WTC11 (cell line): ENCODE measurements at regions of chr16 and their contacts with region 1.

Region 1: GRCh38 chr16:84726079-84726668 is 26.4 kb downstream of the USP10 start:
- DNase-seq: peak; percentile 91
- ATAC-seq: peak; percentile 60
- H3K4me3 Mint-ChIP-seq: peak overlapping the region; percentile 44
- H3K27ac Mint-ChIP-seq: peak overlapping the region; percentile 94
- H3K4me1 Mint-ChIP-seq: peaks cover 88% of the 10 kb centered on the region
- H3K27me3 Mint-ChIP-seq: no peaks in the 10 kb centered on the region
- CTCF ChIP-seq: peak; percentile 98

Region 2: GRCh38 chr16:84504420-84505248 is 221.5 kb before region 1 on chr16 and contains the start of gene MEAK7:
- CTCF ChIA-PET with region 1: interaction called, 11 read pairs
- POLR2A ChIA-PET with region 1: no interaction called
- DNase-seq: peak; percentile 99
- ATAC-seq: peak; percentile 96
- H3K4me3 Mint-ChIP-seq: peak within 1 kb of the TSS; percentile 79
- H3K27ac Mint-ChIP-seq: peak within 1 kb of the TSS; percentile 82
- H3K4me1 Mint-ChIP-seq: peaks cover 23% of the 10 kb centered on the region
- H3K27me3 Mint-ChIP-seq: no peaks in the 10 kb centered on the region
- CTCF ChIP-seq: no peak
- total RNA-seq, gene MEAK7: 14.4 to 16.7 TPM (median 15.3 TPM) in 3 replicates

Region 3: GRCh38 chr16:84617791-84618580 is 108.2 kb before region 1 on chr16 and contains the start of gene COTL1:
- CTCF ChIA-PET with region 1: interaction called, 50 read pairs
- POLR2A ChIA-PET with region 1: no interaction called
- DNase-seq: peak; percentile 95
- ATAC-seq: peak; percentile 67
- H3K4me3 Mint-ChIP-seq: peak within 1 kb of the TSS; percentile 96
- H3K27ac Mint-ChIP-seq: peak within 1 kb of the TSS; percentile 77
- H3K4me1 Mint-ChIP-seq: peaks cover 48% of the 10 kb centered on the region
- H3K27me3 Mint-ChIP-seq: peaks cover 11% of the 10 kb centered on the region
- CTCF ChIP-seq: no peak
- total RNA-seq, gene COTL1: 102 to 122 TPM (median 122 TPM) in 3 replicates

Region 4: DNA sequence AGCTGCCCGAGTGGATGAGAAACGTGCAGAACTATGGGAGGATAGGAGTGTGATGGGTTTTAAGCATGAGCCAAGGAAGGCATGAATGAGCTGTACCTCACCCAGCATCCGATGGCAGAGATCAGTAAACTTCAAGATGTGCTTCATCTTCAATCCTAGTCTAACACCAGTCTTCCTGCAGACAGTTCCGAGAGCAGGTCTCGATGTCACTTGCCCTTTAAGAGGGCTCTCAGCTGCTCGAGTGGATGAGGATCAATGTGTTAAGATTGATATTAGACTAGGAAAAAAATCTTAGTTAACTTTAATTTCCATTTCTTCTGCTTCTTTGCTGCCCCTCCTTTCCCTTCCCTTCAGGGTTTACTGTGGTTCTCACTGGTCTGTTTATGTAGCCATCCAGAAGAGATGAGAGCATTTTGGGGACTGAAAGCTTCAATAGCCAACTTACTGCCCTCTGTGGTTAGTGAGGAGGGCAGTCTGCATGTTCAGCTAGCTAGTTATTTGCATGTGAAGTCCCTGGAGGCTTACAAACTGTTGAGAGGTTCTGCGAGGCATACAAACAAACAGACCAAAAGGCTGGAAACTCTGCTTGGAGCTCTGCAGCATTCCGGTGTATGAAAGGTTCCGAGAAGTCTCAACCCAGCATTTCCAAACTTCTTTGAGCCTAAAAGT is 62.6 kb before region 1 on chr16:
- CTCF ChIA-PET with region 1: interaction called, 31 read pairs
- POLR2A ChIA-PET with region 1: no interaction called
- DNase-seq: no peak
- ATAC-seq: peak; percentile 46; the same call in 1 of the 2 replicates
- H3K4me3 Mint-ChIP-seq: no peak overlapping the region
- H3K27ac Mint-ChIP-seq: peak overlapping the region; percentile 71
- H3K4me1 Mint-ChIP-seq: peaks cover 40% of the 10 kb centered on the region
- H3K27me3 Mint-ChIP-seq: no peaks in the 10 kb centered on the region
- CTCF ChIP-seq: no peak

Region 5: DNA sequence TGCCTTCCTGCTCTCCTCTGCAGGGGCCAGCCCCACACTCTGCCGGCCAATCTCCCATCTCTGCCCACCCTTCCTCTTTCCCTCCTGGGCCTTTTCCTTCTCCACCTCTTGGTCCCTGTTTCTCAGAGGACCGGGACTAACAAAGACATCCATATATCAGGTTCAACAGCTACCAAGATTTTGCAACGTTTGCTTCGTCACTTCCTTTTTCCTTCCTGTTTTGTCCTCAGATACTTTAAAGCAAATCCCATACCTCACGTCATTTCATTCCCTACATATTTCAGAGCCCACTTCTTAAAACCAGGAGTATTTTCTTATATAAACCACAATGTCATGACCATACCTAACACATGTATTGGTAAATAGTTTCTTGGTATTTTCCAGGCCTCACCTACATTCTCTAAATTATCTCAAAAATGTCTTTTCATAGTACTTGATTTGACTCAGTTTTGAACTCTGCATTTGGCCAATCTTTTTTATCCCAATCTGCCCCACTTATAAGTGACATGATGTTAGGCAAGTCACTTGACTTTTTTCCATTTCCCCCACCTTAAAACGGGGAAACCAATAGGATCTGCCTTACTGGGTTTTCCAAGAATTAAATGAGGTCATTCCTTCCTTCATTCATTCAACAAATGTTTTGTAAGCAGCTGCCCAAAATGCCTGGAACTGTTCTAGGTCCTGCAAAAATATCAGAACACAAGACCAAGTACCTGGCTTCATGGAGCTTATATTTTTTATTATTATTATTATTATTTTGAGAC is 33.5 kb before region 1 on chr16:
- CTCF ChIA-PET with region 1: interaction called, 13 read pairs
- POLR2A ChIA-PET with region 1: no interaction called
- DNase-seq: no peak
- ATAC-seq: no peak
- H3K4me3 Mint-ChIP-seq: no peak overlapping the region
- H3K27ac Mint-ChIP-seq: no peak overlapping the region
- H3K4me1 Mint-ChIP-seq: no peaks in the 10 kb centered on the region
- H3K27me3 Mint-ChIP-seq: peaks cover 3% of the 10 kb centered on the region; the same call in 1 of the 2 replicates
- CTCF ChIP-seq: no peak

Region 6: DNA sequence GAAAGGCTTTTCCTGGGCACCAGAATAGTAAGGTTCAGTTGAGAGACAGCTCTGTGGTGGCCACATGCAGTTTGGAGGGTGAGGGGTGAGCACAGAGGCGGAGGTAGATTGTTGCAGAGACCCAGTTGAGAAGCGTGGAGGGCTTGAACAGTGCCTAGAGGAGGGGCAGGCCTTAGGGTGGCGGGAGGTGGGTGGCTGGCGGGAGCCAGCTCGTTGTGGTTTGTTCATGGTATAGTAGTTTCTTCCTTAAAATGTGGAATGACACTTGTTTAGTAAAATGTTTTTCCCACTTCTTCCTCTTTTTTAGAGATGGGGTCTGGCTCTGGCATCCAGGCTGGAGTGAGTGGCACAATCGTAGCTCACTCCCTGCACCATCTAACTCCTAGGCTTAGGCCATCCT is 12.1 kb before region 1 on chr16:
- CTCF ChIA-PET with region 1: interaction called, 78 read pairs
- POLR2A ChIA-PET with region 1: no interaction called
- DNase-seq: no peak
- ATAC-seq: peak; percentile 41
- H3K4me3 Mint-ChIP-seq: no peak overlapping the region
- H3K27ac Mint-ChIP-seq: peak overlapping the region; percentile 44
- H3K4me1 Mint-ChIP-seq: peaks cover 77% of the 10 kb centered on the region
- H3K27me3 Mint-ChIP-seq: no peaks in the 10 kb centered on the region
- CTCF ChIP-seq: no peak

Region 7: GRCh38 chr16:84754353-84754856 is 28.2 kb after region 1 on chr16:
- CTCF ChIA-PET with region 1: interaction called, 17 read pairs
- POLR2A ChIA-PET with region 1: no interaction called
- DNase-seq: peak; percentile 65
- ATAC-seq: peak; percentile 88
- H3K4me3 Mint-ChIP-seq: no peak overlapping the region
- H3K27ac Mint-ChIP-seq: 0 out of 2 replicates have a peak overlapping the region, but pooled peaks have one; percentile 48
- H3K4me1 Mint-ChIP-seq: peaks cover 47% of the 10 kb centered on the region
- H3K27me3 Mint-ChIP-seq: no peaks in the 10 kb centered on the region
- CTCF ChIP-seq: peak; percentile 63

Region 8: DNA sequence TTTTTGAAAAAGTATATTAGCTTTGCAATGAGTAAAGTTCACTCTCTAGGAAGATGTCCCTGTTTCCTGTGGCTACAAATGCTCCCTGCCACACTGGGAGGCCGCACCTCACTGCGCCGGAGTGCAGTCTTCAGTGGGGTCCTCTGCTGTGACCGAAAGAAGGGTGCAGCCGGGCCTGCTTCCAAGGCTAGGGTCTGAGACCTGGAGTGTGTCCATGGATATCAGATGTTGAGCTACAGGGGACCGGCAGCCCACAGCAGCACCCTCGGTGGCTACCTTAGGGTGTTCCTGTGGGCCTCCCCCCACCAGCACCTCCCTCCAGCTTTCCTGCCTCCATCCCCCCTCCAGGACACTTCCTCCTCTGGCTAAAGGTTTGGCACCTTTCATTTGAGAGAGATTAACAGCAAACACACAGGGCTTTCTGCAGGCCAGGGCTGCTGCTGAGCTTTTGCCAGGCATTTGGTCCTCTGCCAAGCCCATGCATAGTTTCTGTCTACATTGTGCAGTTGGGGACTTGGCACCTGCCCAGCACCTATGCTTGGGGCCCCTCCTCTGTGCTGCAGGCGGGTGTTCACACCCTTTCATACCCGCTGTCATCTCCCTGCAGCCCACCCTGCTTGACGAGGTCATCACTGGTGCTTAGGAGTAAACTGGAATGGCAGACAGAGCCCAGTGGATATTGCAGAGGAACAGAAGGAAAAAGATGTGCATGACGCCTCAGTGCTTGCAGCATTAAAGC is 59.8 kb after region 1 on chr16:
- CTCF ChIA-PET with region 1: no interaction called
- POLR2A ChIA-PET with region 1: no interaction called
- DNase-seq: no peak
- ATAC-seq: no peak
- H3K4me3 Mint-ChIP-seq: no peak overlapping the region
- H3K27ac Mint-ChIP-seq: peak overlapping the region; percentile 76; the same call in 1 of the 2 replicates
- H3K4me1 Mint-ChIP-seq: 0 out of 2 replicates have a peak, but pooled peaks cover 3% of the 10 kb centered on the region
- H3K27me3 Mint-ChIP-seq: no peaks in the 10 kb centered on the region
- CTCF ChIP-seq: no peak